Thyroid gland (tissue), 4 donors: ENCODE measurements at regions of chr22 and their contacts with region 1.

Region 1: GRCh38 chr22:42856865-42857704 is at the start of gene ARFGAP3:
- DNase-seq: peak; percentile 91 to 92
- H3K4me3 ChIP-seq: peak within 1 kb of the TSS; percentile 42 to 99 (median 59)
- H3K27ac ChIP-seq: peak within 1 kb of the TSS; percentile 97
- H3K4me1 ChIP-seq: peaks cover 33 to 37% of the 10 kb centered on the region in 2 donors
- H3K27me3 ChIP-seq: no peaks in the 10 kb centered on the region
- CTCF ChIP-seq: no peak
- POLR2A ChIP-seq: peak; percentile 29 to 96
- total RNA-seq, gene ARFGAP3: 82.3 to 106 (median 94.2) TPM

Region 2: DNA sequence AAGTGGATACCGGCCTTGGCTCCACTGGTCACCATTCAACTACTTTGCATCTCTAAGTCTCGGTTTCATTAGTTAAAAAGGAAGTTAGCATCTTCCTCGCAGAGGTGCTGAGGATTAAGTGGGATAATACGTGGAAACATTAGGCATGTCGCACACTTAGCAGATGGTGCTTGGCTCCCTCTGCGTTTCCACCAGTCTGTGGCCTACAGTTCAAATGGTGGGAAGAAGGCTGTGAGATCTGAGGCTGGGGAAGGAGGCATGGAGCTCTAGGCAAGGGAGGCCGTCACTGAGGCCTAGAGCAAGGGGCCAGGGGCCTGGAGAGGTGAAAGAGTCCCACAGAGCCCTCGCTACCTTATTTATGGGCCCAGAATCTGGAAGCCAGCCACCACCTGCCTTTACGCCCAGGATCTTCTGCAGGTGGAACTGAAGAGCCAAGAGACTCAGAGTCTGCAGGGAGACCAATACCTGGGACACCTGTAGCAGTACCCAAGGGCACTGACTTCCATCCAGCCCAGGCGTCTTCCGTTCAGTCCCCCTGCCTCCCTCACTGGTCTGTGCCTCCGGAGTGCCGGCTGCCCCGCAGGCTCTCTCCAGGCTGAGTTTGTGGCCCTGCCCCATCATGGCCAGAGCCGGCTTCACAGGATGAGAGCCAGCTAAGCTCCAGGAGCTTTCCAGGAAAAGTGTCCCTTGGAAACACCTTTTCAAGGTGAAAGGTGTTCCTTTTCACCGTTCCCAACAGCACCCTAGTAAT is 70.3 kb before region 1 on chr22:
- intact Hi-C with region 1: loop called (anchors 5 kb)
- DNase-seq: no peak
- H3K4me3 ChIP-seq: no peak overlapping the region
- H3K27ac ChIP-seq: no peak overlapping the region
- H3K4me1 ChIP-seq: peaks cover 12 to 16% of the 10 kb centered on the region in 2 donors
- H3K27me3 ChIP-seq: no peaks in the 10 kb centered on the region
- CTCF ChIP-seq: no peak
- POLR2A ChIP-seq: no peak